IMR-90 (cell line): ENCODE measurements at regions of chr1 and their contacts with region 1.

Region 1: DNA sequence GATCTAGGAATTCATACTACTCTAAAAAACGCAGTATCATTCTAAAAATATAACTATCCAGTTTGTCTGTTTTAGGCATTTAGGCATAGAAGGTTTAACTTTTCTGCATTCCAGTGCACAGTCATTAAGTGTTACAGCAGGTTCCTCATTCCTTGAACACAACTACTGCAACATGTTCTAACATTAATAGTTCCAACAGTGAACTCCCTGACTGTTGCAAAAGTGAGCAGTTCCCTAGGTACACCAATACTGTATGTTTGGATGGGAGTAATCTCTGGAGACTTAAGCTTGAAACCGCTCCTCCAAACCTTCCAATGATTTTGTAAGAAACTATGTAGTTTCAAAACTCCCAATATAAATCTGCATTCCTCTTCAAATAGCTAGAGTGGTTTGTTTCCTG is 46.2 kb downstream of the UCHL5 start:
- DNase-seq: peak; percentile 74
- ATAC-seq: peak; percentile 94
- H3K4me3 ChIP-seq: no peak overlapping the region
- H3K27ac ChIP-seq: no peak overlapping the region; the same call in 1 of the 2 replicates
- H3K4me1 ChIP-seq: peaks cover 2% of the 10 kb centered on the region
- H3K27me3 ChIP-seq: no peaks in the 10 kb centered on the region
- CTCF ChIP-seq: no peak
- POLR2A ChIP-seq: no peak
- RAD21 ChIP-seq: no peak

Region 2: GRCh38 chr1:192506741-192507155 is 506.3 kb before region 1 on chr1:
- CTCF ChIA-PET with region 1: no interaction called
- POLR2A ChIA-PET with region 1: no interaction called
- dilution Hi-C with region 1: no loop called
- in situ Hi-C with region 1: no loop called
- intact Hi-C with region 1: no loop called
- DNase-seq: peak; percentile 43
- ATAC-seq: 0 out of 2 replicates have a peak, but pooled peaks have one; percentile 27
- H3K4me3 ChIP-seq: no peak overlapping the region
- H3K27ac ChIP-seq: no peak overlapping the region
- H3K4me1 ChIP-seq: no peaks in the 10 kb centered on the region
- H3K27me3 ChIP-seq: no peaks in the 10 kb centered on the region
- CTCF ChIP-seq: peak; percentile 45
- POLR2A ChIP-seq: no peak
- RAD21 ChIP-seq: peak; percentile 57

Region 3: DNA sequence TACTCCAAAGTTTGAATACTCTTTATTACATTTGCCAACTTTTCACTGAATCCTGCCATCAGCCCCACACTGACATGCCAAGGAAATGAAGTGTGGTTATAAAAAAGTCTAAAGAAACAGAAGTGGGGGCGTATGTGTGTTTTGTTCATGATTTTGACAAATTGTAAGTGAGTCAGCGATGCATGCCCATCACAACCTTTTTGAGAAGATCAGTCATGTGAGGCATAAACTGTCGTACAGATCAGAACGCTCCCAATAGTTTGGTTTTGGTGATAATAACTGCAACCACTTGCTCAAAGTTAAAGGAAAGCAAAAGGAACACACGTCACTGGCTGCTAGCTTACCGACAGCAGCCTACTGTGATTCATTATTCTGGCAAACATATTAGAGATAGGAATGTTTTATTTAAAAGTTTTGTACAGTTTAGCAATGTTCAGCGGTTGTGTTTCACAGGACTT is 108.5 kb before region 1 on chr1:
- CTCF ChIA-PET with region 1: no interaction called
- POLR2A ChIA-PET with region 1: no interaction called
- dilution Hi-C with region 1: no loop called
- in situ Hi-C with region 1: no loop called
- intact Hi-C with region 1: loop called (anchors 2 kb)
- DNase-seq: peak; percentile 93
- ATAC-seq: peak; percentile 96
- H3K4me3 ChIP-seq: peak overlapping the region; percentile 32; the same call in 1 of the 2 replicates
- H3K27ac ChIP-seq: no peak overlapping the region
- H3K4me1 ChIP-seq: no peaks in the 10 kb centered on the region
- H3K27me3 ChIP-seq: no peaks in the 10 kb centered on the region
- CTCF ChIP-seq: no peak
- POLR2A ChIP-seq: no peak
- RAD21 ChIP-seq: no peak

Region 4: DNA sequence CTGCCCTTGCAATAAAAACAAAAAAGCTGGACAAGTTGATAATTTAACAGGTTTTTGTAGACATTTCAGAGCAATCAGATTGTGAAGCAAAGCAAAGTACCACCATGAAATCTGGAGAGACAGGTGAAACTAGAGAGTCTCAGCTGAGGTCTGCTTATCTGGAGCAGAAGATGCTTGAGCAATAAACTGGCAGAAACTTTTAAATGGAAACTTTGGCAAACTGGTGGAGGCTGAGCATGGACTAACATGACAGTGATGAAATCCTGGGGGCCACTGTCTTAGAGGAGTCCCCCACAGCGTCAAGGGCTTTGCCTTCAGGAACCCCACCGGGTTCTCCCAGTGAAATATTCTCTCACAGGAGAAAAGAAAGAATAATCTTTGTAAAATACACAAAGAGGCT is 589.7 kb after region 1 on chr1:
- CTCF ChIA-PET with region 1: no interaction called
- POLR2A ChIA-PET with region 1: no interaction called
- dilution Hi-C with region 1: no loop called
- in situ Hi-C with region 1: no loop called
- intact Hi-C with region 1: no loop called
- DNase-seq: no peak
- ATAC-seq: no peak
- H3K4me3 ChIP-seq: no peak overlapping the region
- H3K27ac ChIP-seq: no peak overlapping the region
- H3K4me1 ChIP-seq: no peaks in the 10 kb centered on the region
- H3K27me3 ChIP-seq: no peaks in the 10 kb centered on the region
- CTCF ChIP-seq: no peak
- POLR2A ChIP-seq: no peak
- RAD21 ChIP-seq: no peak